A549 (cell line): ENCODE measurements at regions of chr12 and their contacts with region 1.

Region 1: DNA sequence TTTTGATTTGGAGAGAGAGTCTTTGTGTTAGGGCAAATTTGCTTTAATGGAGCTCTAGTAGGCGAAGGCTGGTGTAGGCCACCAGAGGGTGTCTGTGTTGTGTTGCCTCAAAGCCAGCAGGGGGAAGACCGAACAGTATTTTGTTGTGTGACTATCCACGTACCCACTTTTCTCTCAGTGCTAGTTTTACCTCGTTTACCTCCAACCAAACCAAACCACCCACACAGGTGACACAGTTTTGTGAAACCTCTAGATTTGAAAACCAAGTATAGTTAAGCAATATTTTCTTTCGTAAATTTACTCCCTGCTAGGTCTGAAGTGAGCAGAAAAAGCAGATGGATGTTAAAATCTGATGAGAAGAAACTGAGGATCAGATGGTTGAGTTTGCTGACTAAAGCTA is 36.3 kb upstream of the NPFF start:
- DNase-seq: peak; percentile 74 to 81
- ATAC-seq: peak; percentile 97 to 99
- H3K4me3 ChIP-seq: no peak overlapping the region
- H3K27ac ChIP-seq: peak overlapping the region; percentile 45 to 53
- H3K4me1 ChIP-seq: peaks cover 23% of the 10 kb centered on the region
- CTCF ChIP-seq: peak; percentile 93
- EP300 ChIP-seq: no peak
- POLR2A ChIP-seq: no peak
- RAD21 ChIP-seq: peak; percentile 92 to 94

Region 2: GRCh38 chr12:53123578-53124351 is 419.8 kb before region 1 on chr12:
- CTCF ChIA-PET with region 1: no interaction called
- POLR2A ChIA-PET with region 1: no interaction called
- DNase-seq: peak in 1 of 2 experiments; percentile 45
- ATAC-seq: peak; percentile 58 to 63; a peak in 5 of 6 replicates
- H3K4me3 ChIP-seq: no peak overlapping the region
- H3K27ac ChIP-seq: no peak overlapping the region
- H3K4me1 ChIP-seq: peaks cover 11% of the 10 kb centered on the region; the same call in 2 of the 3 replicates
- CTCF ChIP-seq: no peak
- EP300 ChIP-seq: no peak
- POLR2A ChIP-seq: no peak
- RAD21 ChIP-seq: no peak

Region 3: GRCh38 chr12:53443955-53444354 is 99.6 kb before region 1 on chr12:
- CTCF ChIA-PET with region 1: no interaction called
- POLR2A ChIA-PET with region 1: no interaction called
- DNase-seq: no peak
- ATAC-seq: no peak
- H3K4me3 ChIP-seq: no peak overlapping the region
- H3K27ac ChIP-seq: no peak overlapping the region
- H3K4me1 ChIP-seq: peaks cover 26% of the 10 kb centered on the region
- CTCF ChIP-seq: no peak
- EP300 ChIP-seq: no peak
- POLR2A ChIP-seq: no peak
- RAD21 ChIP-seq: no peak

Region 4: DNA sequence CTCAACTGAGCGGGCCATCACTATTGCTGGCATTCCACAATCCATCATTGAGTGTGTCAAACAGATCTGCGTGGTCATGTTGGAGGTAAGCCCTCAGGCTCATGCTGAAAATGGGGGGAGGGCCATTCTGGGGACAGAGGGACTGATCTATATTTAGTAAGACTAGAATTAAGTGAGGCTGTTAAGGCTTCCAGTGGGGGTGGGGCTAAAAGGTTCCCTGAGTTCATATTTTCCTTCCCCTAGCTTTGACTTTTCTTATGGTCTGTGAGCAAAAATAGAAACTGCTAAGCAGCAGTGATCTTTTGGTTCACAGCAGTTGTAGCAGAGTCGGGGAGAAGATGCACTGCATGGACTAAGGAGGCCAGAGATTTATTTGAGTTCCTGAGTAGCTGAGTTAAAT is 82.5 kb before region 1 on chr12:
- CTCF ChIA-PET with region 1: no interaction called
- POLR2A ChIA-PET with region 1: no interaction called
- DNase-seq: no peak
- ATAC-seq: no peak
- H3K4me3 ChIP-seq: no peak overlapping the region
- H3K27ac ChIP-seq: no peak overlapping the region
- H3K4me1 ChIP-seq: peaks cover 54% of the 10 kb centered on the region; the same call in 2 of the 3 replicates
- CTCF ChIP-seq: no peak
- EP300 ChIP-seq: no peak
- POLR2A ChIP-seq: no peak
- RAD21 ChIP-seq: no peak

Region 5: GRCh38 chr12:53530920-53531319 is 12.6 kb before region 1 on chr12:
- CTCF ChIA-PET with region 1: interaction called, 11 read pairs
- POLR2A ChIA-PET with region 1: interaction called, 5 read pairs
- DNase-seq: no peak
- ATAC-seq: peak in 1 of 2 experiments; percentile 68; a peak in 3 of 6 replicates
- H3K4me3 ChIP-seq: no peak overlapping the region
- H3K27ac ChIP-seq: no peak overlapping the region
- H3K4me1 ChIP-seq: peaks cover 5% of the 10 kb centered on the region; the same call in 1 of the 3 replicates
- CTCF ChIP-seq: no peak
- EP300 ChIP-seq: no peak
- POLR2A ChIP-seq: no peak
- RAD21 ChIP-seq: no peak

Region 6: DNA sequence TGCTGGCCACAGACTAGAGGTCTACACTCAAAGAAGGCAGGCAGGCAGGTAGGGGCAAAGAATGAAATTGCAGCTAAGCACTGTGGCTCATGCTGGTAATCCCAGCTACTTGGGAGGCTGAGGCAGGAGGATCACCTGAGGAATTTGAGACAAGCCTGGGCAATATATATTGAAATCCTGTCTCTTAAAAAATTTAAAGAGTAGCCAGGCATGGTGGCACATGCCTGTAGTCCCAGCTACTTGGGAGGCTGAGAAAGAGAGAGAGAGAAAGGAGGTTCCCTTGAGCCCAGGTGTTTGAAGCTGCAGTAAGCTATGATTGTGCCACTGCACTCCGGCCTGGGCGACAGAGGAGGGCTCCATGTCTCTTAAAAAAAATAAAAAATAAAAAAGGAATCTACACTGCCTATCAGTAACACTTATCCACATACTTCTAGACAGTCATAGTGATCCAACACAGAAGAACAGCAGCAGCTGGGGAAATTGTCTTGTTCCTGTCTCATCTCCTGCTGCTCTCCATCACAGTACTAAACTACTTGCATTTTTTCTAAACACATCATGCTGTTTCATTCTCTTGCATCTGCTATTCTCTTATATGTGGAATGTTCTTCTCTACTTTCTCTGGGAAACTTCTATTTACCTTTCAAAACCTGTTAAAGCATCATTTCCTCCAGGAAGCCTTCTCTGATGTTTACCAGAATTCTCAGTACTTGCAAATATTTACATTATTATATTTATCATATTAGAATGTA is 25.4 kb after region 1 on chr12:
- CTCF ChIA-PET with region 1: interaction called, 35 read pairs
- POLR2A ChIA-PET with region 1: no interaction called
- DNase-seq: no peak
- ATAC-seq: no peak; a peak in 1 of 6 replicates
- H3K4me3 ChIP-seq: no peak overlapping the region
- H3K27ac ChIP-seq: peak overlapping the region; percentile 45 to 49; a peak in 4 of 6 replicates
- H3K4me1 ChIP-seq: peaks cover 28% of the 10 kb centered on the region; the same call in 2 of the 3 replicates
- CTCF ChIP-seq: no peak
- EP300 ChIP-seq: no peak
- POLR2A ChIP-seq: no peak
- RAD21 ChIP-seq: no peak

Region 7: DNA sequence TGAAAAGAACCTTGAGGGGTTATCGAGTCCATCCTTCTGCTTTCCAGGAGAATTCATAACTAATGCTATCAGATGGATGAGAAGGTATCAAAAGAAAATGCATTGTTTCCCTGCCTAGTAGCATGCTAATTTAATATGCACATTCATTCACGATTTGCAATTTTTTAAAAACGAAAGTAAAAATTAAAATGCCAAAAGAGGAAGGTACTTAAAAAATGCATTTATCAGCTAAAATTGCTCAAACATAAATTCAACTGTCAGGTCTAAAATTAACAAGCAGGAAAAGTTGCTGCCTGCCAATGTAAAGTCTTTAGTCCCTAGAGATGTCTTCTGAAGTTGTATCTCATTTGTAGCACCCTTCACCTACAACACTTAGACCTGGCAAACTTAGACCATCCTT is 74.7 kb after region 1 on chr12:
- CTCF ChIA-PET with region 1: interaction called, 41 read pairs
- POLR2A ChIA-PET with region 1: no interaction called
- DNase-seq: no peak
- ATAC-seq: no peak
- H3K4me3 ChIP-seq: no peak overlapping the region
- H3K27ac ChIP-seq: 0 out of 6 replicates have a peak overlapping the region, but pooled peaks of 1 of the 2 experiments have one; percentile 15
- H3K4me1 ChIP-seq: peaks cover 34% of the 10 kb centered on the region; the same call in 2 of the 3 replicates
- CTCF ChIP-seq: no peak
- EP300 ChIP-seq: no peak
- POLR2A ChIP-seq: no peak
- RAD21 ChIP-seq: no peak

Region 8: DNA sequence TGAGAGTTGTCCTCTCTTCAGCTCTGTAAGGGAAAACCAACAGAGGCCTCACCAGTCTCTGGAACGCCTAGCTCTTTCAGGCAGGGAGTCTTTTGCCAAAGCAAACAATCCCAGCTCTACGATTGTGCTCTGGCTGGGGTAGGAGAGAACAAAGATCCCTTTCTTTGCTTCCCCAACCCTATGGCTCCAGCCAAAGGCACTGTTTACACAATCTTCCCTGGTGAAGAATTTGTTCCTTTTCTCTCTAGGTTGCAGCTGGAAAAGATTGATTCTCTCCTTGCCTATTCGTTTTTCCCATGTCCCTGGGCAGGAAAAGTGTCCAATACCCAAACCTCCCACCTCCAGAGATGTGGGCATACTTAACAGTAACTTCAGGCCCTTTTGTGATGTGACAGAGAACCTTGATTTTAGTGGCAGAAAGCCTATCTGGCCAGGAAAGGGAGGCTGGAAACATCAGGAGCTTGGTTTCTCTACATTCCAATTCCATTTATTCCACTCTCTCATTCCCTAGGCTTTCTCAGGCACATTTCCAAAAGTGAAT is 115.5 kb after region 1 on chr12:
- CTCF ChIA-PET with region 1: interaction called, 22 read pairs
- POLR2A ChIA-PET with region 1: interaction called, 5 read pairs
- DNase-seq: peak; percentile 25 to 81
- ATAC-seq: peak; percentile 85 to 92
- H3K4me3 ChIP-seq: peak overlapping the region; percentile 19; the same call in 1 of the 3 replicates
- H3K27ac ChIP-seq: peak overlapping the region; percentile 85 to 86
- H3K4me1 ChIP-seq: peaks cover 36% of the 10 kb centered on the region
- CTCF ChIP-seq: no peak
- EP300 ChIP-seq: no peak
- POLR2A ChIP-seq: no peak
- RAD21 ChIP-seq: no peak